OCI-LY7 (cell line): ENCODE measurements at regions of chr6 and their contacts with region 1.

Region 1: GRCh38 chr6:144582939-144583613 is 297.9 kb downstream of the UTRN start:
- DNase-seq: peak; percentile 63
- H3K4me3 ChIP-seq: peak overlapping the region; percentile 53
- H3K27ac ChIP-seq: no peak overlapping the region
- H3K4me1 ChIP-seq: peaks cover 16% of the 10 kb centered on the region
- CTCF ChIP-seq: no peak

Region 2: DNA sequence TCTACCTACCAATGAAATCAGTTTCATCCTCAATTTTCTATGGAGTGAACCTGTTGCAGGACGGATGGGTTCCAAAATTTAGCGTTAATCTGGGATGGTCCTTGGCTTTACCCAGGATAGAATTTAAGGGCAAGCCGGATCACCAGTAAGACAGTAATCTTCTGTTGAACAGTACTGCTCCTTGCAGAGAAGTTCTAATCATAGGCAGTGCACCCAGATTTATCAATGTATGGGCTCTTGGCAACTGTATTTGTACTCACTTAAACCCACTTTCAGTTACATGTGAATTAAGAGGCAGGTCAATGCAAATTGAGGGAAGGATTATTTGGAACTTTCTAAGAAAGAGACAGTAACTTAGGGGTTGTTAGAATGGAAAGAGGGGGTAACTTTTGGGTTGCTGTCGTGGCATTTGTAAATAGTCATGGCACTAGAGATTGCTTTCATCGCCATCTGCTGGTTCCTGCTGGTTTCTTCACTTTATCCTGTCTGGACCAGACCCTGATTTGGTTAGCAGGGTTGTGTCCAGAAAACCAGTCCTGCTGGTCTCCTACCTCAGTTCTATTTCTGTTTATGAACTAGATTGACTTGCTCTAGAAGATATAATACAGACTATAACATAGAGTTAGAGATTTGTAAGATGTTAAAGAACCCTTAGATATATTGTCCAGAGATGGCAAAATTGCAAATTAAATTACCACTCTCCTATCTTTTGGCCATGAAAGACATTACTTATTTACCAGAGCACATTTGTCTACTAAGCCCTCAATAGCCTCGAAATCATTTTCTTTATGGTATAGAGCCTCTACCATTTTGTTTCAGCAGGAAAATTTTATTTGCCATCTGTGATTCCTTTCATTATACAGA is 348.3 kb after region 1 on chr6:
- CTCF ChIA-PET with region 1: no interaction called
- POLR2A ChIA-PET with region 1: no interaction called
- intact Hi-C with region 1: loop called (anchors 2 kb)
- DNase-seq: peak; percentile 14
- H3K4me3 ChIP-seq: no peak overlapping the region
- H3K27ac ChIP-seq: no peak overlapping the region
- H3K4me1 ChIP-seq: no peaks in the 10 kb centered on the region
- CTCF ChIP-seq: peak; percentile 76

Region 3: GRCh38 chr6:145028144-145028818 is 445.2 kb after region 1 on chr6:
- CTCF ChIA-PET with region 1: no interaction called
- POLR2A ChIA-PET with region 1: interaction called, 3 read pairs
- intact Hi-C with region 1: loop called (anchors 5 kb)
- DNase-seq: peak; percentile 29
- H3K4me3 ChIP-seq: no peak overlapping the region
- H3K27ac ChIP-seq: no peak overlapping the region
- H3K4me1 ChIP-seq: no peaks in the 10 kb centered on the region
- CTCF ChIP-seq: peak; percentile 76

Region 4: GRCh38 chr6:145214570-145214969 is 631.5 kb after region 1 on chr6:
- CTCF ChIA-PET with region 1: no interaction called
- POLR2A ChIA-PET with region 1: interaction called, 3 read pairs
- intact Hi-C with region 1: loop called (anchors 2 kb)
- DNase-seq: peak; percentile 27
- H3K4me3 ChIP-seq: no peak overlapping the region
- H3K27ac ChIP-seq: no peak overlapping the region
- H3K4me1 ChIP-seq: no peaks in the 10 kb centered on the region
- CTCF ChIP-seq: peak; percentile 85

Region 5: GRCh38 chr6:145633981-145634627 is 1051.0 kb after region 1 on chr6:
- CTCF ChIA-PET with region 1: no interaction called
- POLR2A ChIA-PET with region 1: no interaction called
- intact Hi-C with region 1: loop called (anchors 10 kb)
- DNase-seq: peak; percentile 75
- H3K4me3 ChIP-seq: no peak overlapping the region
- H3K27ac ChIP-seq: no peak overlapping the region
- H3K4me1 ChIP-seq: no peaks in the 10 kb centered on the region
- CTCF ChIP-seq: peak; percentile 92

Region 6: GRCh38 chr6:145704143-145704781 is 1121.2 kb after region 1 on chr6:
- CTCF ChIA-PET with region 1: no interaction called
- POLR2A ChIA-PET with region 1: no interaction called
- intact Hi-C with region 1: loop called (anchors 10 kb)
- DNase-seq: peak; percentile 22
- H3K4me3 ChIP-seq: no peak overlapping the region
- H3K27ac ChIP-seq: no peak overlapping the region
- H3K4me1 ChIP-seq: no peaks in the 10 kb centered on the region
- CTCF ChIP-seq: peak; percentile 85